Dorsolateral prefrontal cortex (tissue), 120 donors: ENCODE measurements at regions of chr1 and their contacts with region 1.

Region 1: DNA sequence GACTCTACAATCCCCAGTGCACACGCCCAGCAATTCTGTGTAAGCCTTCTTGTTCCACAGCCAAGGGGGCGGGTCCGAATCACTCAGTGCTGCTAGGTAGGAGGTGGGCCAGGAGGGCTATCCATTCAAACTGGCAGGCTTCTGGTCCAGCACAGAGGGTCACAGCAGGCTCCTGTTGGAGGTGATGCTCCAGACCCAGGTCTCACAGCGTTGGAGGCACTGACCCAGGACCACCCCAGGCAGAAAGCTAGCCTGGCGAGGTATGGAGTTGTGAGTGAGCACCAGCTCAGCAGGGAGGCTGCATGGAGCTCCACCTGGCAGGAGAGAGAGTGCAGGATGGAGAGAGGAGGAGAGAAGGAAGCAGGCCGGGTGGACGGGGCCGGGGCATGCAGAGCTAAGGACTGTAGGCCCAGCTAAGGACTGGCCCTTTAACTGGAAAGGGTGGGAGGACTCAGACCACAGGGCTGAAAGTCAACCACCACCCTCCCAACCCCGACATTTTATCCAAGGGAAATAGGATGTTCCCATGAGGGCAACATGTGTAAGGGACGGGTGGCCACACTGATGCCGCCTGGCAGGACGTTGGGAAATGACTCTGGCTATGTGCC is 38.7 kb downstream of the GPR161 start:
- DNase-seq: no peak
- H3K4me3 ChIP-seq: no peak overlapping the region
- H3K27ac ChIP-seq: no peak overlapping the region
- H3K27me3 ChIP-seq: no peaks in the 10 kb centered on the region
- CTCF ChIP-seq: no peak

Region 2: GRCh38 chr1:168050307-168050706 is 47.7 kb before region 1 on chr1:
- intact Hi-C with region 1: no loop called
- DNase-seq: no peak
- H3K4me3 ChIP-seq: no peak overlapping the region
- H3K27ac ChIP-seq: peak overlapping the region in 1 of 59 donors; percentile 45
- H3K27me3 ChIP-seq: no peaks in the 10 kb centered on the region
- CTCF ChIP-seq: no peak

Region 3: DNA sequence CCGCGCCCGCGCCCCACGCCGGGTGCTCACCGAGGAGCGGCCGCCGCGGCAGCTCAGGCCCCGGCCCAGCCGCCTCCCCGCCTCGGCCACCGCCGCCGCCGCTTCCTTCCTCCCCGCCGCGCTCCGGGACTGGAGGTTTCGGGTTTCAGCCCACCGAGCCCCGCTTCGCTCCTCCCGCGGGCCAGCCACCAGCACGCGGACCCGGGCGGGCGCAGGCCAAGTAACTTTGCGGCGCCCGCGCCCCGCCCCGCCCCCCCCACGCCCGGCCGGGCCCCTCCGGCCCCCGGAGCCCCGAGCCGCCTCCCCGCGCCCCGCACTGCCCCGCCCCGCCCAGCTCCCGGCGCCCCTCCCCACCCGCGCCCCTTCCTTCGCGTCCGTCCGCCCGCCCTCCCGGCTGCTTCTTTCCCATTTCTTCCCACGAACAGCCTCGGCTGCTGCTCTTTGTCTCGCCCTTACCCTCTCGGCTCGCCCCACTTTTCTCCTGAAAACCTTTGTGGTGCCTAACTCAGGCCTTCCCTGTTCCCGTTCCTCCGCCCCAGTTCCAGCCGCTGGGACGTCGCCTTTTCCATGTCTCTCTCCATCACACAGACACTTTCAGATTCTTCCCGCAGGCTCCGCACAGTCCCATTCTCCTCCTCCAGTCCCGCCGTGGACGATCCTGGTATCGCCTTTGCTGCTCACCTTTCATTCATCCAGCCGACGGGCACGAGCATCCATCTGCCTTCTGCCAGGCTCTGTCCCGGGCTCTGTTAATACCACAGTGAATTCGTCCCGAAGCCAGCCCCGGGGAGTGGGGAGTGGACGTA is 38.9 kb after region 1 on chr1 and contains the start of gene GPR161:
- intact Hi-C with region 1: loop called in 1 of 2 experiments (anchors 5 kb)
- DNase-seq: peak in 8 of 10 donors; percentile 5 to 54 (median 38)
- H3K4me3 ChIP-seq: peak within 1 kb of the TSS; percentile 57 to 93 (median 77)
- H3K27ac ChIP-seq: peak within 1 kb of the TSS in 51 of 59 donors; percentile 1 to 83 (median 63)
- H3K27me3 ChIP-seq: peaks cover 0 to 38% (median 0%) of the 10 kb centered on the region in 45 donors
- CTCF ChIP-seq: no peak
- total RNA-seq, gene GPR161: 7.9 to 19.9 (median 13.2) TPM